ENCODE measurements at regions of chr11 and their contacts with region 1.

Region 1: GRCh38 chr11:61679893-61680621 is at the start of gene DAGLA:
- DNase-seq: no peak
- ATAC-seq: peak; percentile 82
- H3K4me3 ChIP-seq: peak within 1 kb of the TSS; percentile 49 to 58
- H3K27ac ChIP-seq: peak within 1 kb of the TSS; percentile 44; the same call in 1 of the 2 replicates
- H3K4me1 ChIP-seq: peaks cover 22% of the 10 kb centered on the region
- H3K27me3 ChIP-seq: no peaks in the 10 kb centered on the region
- CTCF ChIP-seq: peak; percentile 99
- total RNA-seq, gene DAGLA: 6.4 TPM

Region 2: GRCh38 chr11:61712846-61713245 is 32.8 kb after region 1 on chr11:
- CTCF ChIA-PET with region 1: no interaction called
- POLR2A ChIA-PET with region 1: interaction called, 10 read pairs
- in situ Hi-C with region 1: no loop called
- intact Hi-C with region 1: no loop called
- DNase-seq: no peak
- ATAC-seq: no peak
- H3K4me3 ChIP-seq: no peak overlapping the region
- H3K27ac ChIP-seq: no peak overlapping the region
- H3K4me1 ChIP-seq: 0 out of 2 replicates have a peak, but pooled peaks cover 3% of the 10 kb centered on the region
- H3K27me3 ChIP-seq: no peaks in the 10 kb centered on the region
- CTCF ChIP-seq: no peak

Region 3: DNA sequence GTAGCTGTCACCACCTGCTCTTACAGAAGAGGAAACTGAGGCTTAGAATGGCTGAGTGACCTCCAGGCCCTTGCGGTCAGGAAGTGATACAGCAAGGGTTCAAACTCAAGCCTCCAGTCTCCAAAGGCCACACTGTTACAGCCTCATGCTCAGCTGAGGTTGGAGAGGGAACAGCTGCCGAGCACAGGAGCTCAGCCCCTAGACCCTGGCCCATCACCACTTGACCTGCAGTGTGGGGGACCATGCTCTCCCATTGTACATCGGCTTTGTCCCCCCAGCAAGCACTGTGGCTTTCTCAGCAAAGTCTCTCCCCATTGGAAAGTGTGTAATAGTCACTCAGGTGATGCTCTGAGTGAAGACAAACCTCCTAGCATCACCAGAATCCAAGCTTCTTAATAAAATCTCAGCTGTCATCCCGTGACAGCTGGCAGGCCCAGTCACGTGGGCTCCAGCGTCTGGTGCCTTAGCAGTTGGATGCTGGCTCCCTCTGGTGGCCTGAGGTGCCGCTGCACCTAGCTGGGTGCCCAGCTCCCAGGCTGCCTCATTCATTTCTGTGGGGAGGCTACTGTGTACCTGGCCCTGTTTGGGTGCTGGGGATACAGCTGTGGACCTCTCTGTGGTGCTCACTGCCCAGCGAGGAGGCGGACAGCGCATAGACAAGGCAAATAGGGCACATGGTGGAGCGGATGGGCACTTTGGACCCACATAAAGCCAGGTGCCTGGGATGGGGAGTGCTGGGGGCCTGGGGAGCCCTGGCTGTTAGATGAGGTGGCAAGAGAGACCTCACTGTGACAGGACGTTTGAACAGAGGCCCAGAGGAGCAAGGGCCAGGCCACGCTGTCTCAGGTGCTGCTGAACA is 53.3 kb after region 1 on chr11:
- CTCF ChIA-PET with region 1: no interaction called
- POLR2A ChIA-PET with region 1: no interaction called
- in situ Hi-C with region 1: no loop called
- intact Hi-C with region 1: loop called (anchors 5 kb)
- DNase-seq: peak; percentile 55
- ATAC-seq: peak; percentile 76
- H3K4me3 ChIP-seq: no peak overlapping the region
- H3K27ac ChIP-seq: no peak overlapping the region
- H3K4me1 ChIP-seq: peaks cover 21% of the 10 kb centered on the region
- H3K27me3 ChIP-seq: no peaks in the 10 kb centered on the region
- CTCF ChIP-seq: peak; percentile 99

Region 4: DNA sequence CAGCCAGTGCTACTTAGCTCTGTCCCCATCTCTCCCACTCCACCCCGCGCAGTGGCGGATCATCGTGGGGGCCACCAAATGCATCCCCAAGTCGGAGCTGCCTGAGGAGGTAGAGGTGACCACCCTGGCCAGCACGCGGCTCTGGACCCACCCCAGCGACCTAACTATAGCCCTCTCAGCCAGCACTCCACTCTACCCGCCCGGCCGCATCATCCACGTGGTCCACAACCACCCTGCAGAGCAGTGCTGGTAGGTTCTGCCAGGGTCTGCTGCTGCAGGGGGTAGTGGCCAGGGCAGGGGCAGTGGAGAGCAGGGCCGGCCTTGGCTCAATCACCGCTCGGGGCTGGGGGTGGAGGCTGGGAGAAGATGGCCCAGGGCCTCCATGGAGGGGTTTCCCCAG is 59.4 kb after region 1 on chr11:
- CTCF ChIA-PET with region 1: interaction called, 11 read pairs
- POLR2A ChIA-PET with region 1: no interaction called
- in situ Hi-C with region 1: no loop called
- intact Hi-C with region 1: loop called (anchors 5 kb)
- DNase-seq: no peak
- ATAC-seq: no peak
- H3K4me3 ChIP-seq: no peak overlapping the region
- H3K27ac ChIP-seq: no peak overlapping the region
- H3K4me1 ChIP-seq: no peaks in the 10 kb centered on the region
- H3K27me3 ChIP-seq: no peaks in the 10 kb centered on the region
- CTCF ChIP-seq: no peak

Region 5: DNA sequence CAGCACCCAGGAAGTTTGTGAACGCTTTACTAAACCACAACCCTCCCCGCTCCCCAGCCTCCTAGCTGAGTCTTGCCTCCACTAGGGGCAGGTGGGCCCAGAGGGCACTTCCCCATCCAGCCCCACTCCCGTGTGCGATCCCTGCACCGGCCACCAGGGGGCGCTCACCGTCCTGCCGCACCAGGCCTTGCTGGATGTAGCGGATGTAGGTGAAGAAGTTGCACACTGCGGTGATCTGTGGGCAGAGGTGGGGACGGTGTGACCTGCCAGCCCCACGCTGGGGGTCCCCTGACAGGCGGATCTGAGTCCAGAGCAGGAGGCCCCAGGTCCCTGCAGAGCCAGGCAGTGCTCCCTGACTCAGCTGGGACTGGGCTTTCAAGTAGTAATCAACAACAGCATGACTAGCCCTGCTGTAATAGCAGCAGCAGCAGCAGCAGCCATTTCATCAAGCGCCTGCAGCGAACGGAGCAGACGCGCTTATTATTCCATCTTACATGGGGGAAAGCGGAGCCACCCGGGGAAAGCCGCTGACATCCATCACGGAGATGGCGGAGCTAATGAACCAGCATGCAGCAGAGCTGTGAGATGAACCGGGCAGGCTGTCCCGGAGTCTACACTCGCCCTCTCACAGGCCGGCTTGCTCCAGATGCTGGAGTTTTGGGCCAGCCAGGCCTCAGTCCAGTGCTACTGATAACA is 219.2 kb after region 1 on chr11:
- CTCF ChIA-PET with region 1: no interaction called
- POLR2A ChIA-PET with region 1: no interaction called
- in situ Hi-C with region 1: no loop called
- intact Hi-C with region 1: no loop called
- DNase-seq: peak; percentile 41
- ATAC-seq: peak; percentile 86
- H3K4me3 ChIP-seq: no peak overlapping the region
- H3K27ac ChIP-seq: no peak overlapping the region
- H3K4me1 ChIP-seq: no peaks in the 10 kb centered on the region
- H3K27me3 ChIP-seq: no peaks in the 10 kb centered on the region
- CTCF ChIP-seq: peak; percentile 99